ENCODE measurements at regions of chr9 and their contacts with region 1.

Region 1: GRCh38 chr9:107340920-107341632 is 58.0 kb downstream of the RAD23B start:
- DNase-seq: peak; percentile 65
- H3K4me3 Mint-ChIP-seq: no peak overlapping the region
- H3K27ac Mint-ChIP-seq: no peak overlapping the region
- H3K4me1 Mint-ChIP-seq: peaks cover 10% of the 10 kb centered on the region
- H3K27me3 Mint-ChIP-seq: no peaks in the 10 kb centered on the region

Region 2: GRCh38 chr9:107137495-107138202 is 203.4 kb before region 1 on chr9:
- intact Hi-C with region 1: loop called (anchors 1 kb)
- DNase-seq: no peak
- H3K4me3 Mint-ChIP-seq: no peak overlapping the region
- H3K27ac Mint-ChIP-seq: no peak overlapping the region
- H3K4me1 Mint-ChIP-seq: no peaks in the 10 kb centered on the region
- H3K27me3 Mint-ChIP-seq: peaks cover 2% of the 10 kb centered on the region

Region 3: GRCh38 chr9:107158321-107158720 is 182.8 kb before region 1 on chr9:
- intact Hi-C with region 1: loop called (anchors 5 kb)
- DNase-seq: no peak
- H3K4me3 Mint-ChIP-seq: no peak overlapping the region
- H3K27ac Mint-ChIP-seq: no peak overlapping the region
- H3K4me1 Mint-ChIP-seq: no peaks in the 10 kb centered on the region
- H3K27me3 Mint-ChIP-seq: peaks cover 3% of the 10 kb centered on the region

Region 4: DNA sequence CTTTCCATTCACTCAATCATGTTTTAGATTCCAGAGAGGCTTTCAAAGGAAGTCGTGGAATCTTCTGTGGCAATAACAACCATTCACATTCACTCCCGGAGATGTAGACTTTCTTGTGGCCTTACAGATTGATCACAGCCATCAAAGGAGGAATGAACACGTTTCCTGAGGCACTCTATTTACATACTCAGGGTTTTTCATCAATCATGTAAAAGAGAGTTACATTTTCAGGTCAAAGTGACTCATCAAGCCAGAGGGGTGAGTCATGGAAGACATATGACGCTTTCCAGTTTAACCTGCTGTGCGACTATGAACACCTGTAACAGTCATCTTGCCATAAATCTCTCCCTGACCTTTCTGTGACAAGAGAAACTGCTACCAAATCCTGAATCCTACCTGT is 97.3 kb before region 1 on chr9:
- intact Hi-C with region 1: loop called (anchors 1 kb)
- DNase-seq: peak; percentile 17
- H3K4me3 Mint-ChIP-seq: no peak overlapping the region
- H3K27ac Mint-ChIP-seq: peak overlapping the region; percentile 82
- H3K4me1 Mint-ChIP-seq: peaks cover 15% of the 10 kb centered on the region
- H3K27me3 Mint-ChIP-seq: peaks cover 6% of the 10 kb centered on the region